Caco-2 (cell line): ENCODE measurements at regions of chr2 and their contacts with region 1.

Region 1: GRCh38 chr2:98444436-98445176 is at the start of gene INPP4A:
- DNase-seq: peak; percentile 83 to 89
- H3K4me3 ChIP-seq: peak within 1 kb of the TSS; percentile 78
- H3K4me3 Mint-ChIP-seq: peak within 1 kb of the TSS; percentile 82
- H3K27ac Mint-ChIP-seq: peak within 1 kb of the TSS; percentile 76
- H3K4me1 ChIP-seq: peaks cover 44% of the 10 kb centered on the region
- H3K4me1 Mint-ChIP-seq: peaks cover 15% of the 10 kb centered on the region
- H3K27me3 ChIP-seq: no peaks in the 10 kb centered on the region
- H3K27me3 Mint-ChIP-seq: no peaks in the 10 kb centered on the region
- CTCF ChIP-seq: no peak
- total RNA-seq, gene INPP4A: 24.9 and 26.3 TPM in 2 replicates

Region 2: GRCh38 chr2:98457045-98457652 is 12.5 kb after region 1 on chr2:
- CTCF ChIA-PET with region 1: interaction called, 4 read pairs
- POLR2A ChIA-PET with region 1: interaction called, 12 read pairs
- intact Hi-C with region 1: no loop called
- DNase-seq: no peak
- H3K4me3 ChIP-seq: no peak overlapping the region
- H3K4me3 Mint-ChIP-seq: no peak overlapping the region
- H3K27ac Mint-ChIP-seq: no peak overlapping the region
- H3K4me1 ChIP-seq: no peaks in the 10 kb centered on the region
- H3K4me1 Mint-ChIP-seq: peaks cover 13% of the 10 kb centered on the region
- H3K27me3 ChIP-seq: no peaks in the 10 kb centered on the region
- H3K27me3 Mint-ChIP-seq: no peaks in the 10 kb centered on the region
- CTCF ChIP-seq: no peak

Region 3: GRCh38 chr2:98541906-98542305 is 97.3 kb after region 1 on chr2:
- CTCF ChIA-PET with region 1: no interaction called
- POLR2A ChIA-PET with region 1: no interaction called
- intact Hi-C with region 1: no loop called
- DNase-seq: no peak
- H3K4me3 ChIP-seq: no peak overlapping the region
- H3K4me3 Mint-ChIP-seq: no peak overlapping the region
- H3K27ac Mint-ChIP-seq: no peak overlapping the region
- H3K4me1 ChIP-seq: no peaks in the 10 kb centered on the region
- H3K4me1 Mint-ChIP-seq: no peaks in the 10 kb centered on the region
- H3K27me3 ChIP-seq: no peaks in the 10 kb centered on the region
- H3K27me3 Mint-ChIP-seq: no peaks in the 10 kb centered on the region
- CTCF ChIP-seq: no peak